ENCODE measurements at regions of chr18 and their contacts with region 1.

Region 1: DNA sequence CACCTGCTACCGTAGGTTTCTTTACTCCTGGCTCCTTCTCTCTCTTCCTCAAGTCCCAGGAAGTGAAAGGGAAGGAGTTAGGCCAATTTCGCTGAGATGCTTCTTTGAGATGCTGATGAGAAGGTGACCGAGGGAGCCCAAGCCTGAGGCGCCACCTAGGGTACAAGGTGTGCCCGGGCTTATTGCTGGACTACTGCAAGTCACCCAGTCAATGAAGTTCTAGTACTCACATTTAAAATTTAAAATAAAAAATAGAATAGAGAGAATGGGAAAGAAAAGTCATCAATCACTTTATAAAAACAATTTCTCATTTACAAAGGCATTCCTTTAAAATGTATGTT is 45.3 kb downstream of the ACAA2 start:
- DNase-seq: peak; percentile 18
- ATAC-seq: peak; percentile 75
- H3K4me3 ChIP-seq: no peak overlapping the region
- H3K27ac ChIP-seq: no peak overlapping the region
- H3K4me1 ChIP-seq: no peaks in the 10 kb centered on the region
- H3K27me3 ChIP-seq: no peaks in the 10 kb centered on the region
- CTCF ChIP-seq: peak; percentile 73
- EP300 ChIP-seq: no peak
- POLR2A ChIP-seq: no peak
- RAD21 ChIP-seq: peak; percentile 52; the same call in 1 of the 2 replicates

Region 2: GRCh38 chr18:49510393-49511115 is 257.5 kb before region 1 on chr18:
- CTCF ChIA-PET with region 1: interaction called, 6 read pairs
- POLR2A ChIA-PET with region 1: no interaction called
- in situ Hi-C with region 1: no loop called
- intact Hi-C with region 1: loop called (anchors 1 kb)
- DNase-seq: no peak
- ATAC-seq: peak; percentile 85
- H3K4me3 ChIP-seq: no peak overlapping the region
- H3K27ac ChIP-seq: no peak overlapping the region
- H3K4me1 ChIP-seq: peaks cover 13% of the 10 kb centered on the region
- H3K27me3 ChIP-seq: 0 out of 5 replicates have a peak, but pooled peaks cover 0 to 2% of the 10 kb centered on the region in 2 experiments
- CTCF ChIP-seq: peak; percentile 89
- EP300 ChIP-seq: no peak
- POLR2A ChIP-seq: no peak
- RAD21 ChIP-seq: peak; percentile 84

Region 3: GRCh38 chr18:49561289-49562193 is 206.5 kb before region 1 on chr18 and contains the start of gene LIPG:
- CTCF ChIA-PET with region 1: interaction called, 7 read pairs
- POLR2A ChIA-PET with region 1: no interaction called
- in situ Hi-C with region 1: no loop called
- intact Hi-C with region 1: loop called (anchors 1 kb)
- DNase-seq: peak; percentile 34
- ATAC-seq: peak; percentile 88
- H3K4me3 ChIP-seq: peak within 1 kb of the TSS; percentile 28 to 67 (median 46)
- H3K27ac ChIP-seq: no peak within 1 kb of the TSS
- H3K4me1 ChIP-seq: peaks cover 45% of the 10 kb centered on the region
- H3K27me3 ChIP-seq: peaks cover 16 to 37% of the 10 kb centered on the region in 2 experiments
- CTCF ChIP-seq: no peak
- EP300 ChIP-seq: no peak
- POLR2A ChIP-seq: peak; percentile 53 to 74; a peak in 3 of 4 replicates
- RAD21 ChIP-seq: no peak
- total RNA-seq, gene LIPG: 4.9 and 10.8 TPM in 2 replicates

Region 4: DNA sequence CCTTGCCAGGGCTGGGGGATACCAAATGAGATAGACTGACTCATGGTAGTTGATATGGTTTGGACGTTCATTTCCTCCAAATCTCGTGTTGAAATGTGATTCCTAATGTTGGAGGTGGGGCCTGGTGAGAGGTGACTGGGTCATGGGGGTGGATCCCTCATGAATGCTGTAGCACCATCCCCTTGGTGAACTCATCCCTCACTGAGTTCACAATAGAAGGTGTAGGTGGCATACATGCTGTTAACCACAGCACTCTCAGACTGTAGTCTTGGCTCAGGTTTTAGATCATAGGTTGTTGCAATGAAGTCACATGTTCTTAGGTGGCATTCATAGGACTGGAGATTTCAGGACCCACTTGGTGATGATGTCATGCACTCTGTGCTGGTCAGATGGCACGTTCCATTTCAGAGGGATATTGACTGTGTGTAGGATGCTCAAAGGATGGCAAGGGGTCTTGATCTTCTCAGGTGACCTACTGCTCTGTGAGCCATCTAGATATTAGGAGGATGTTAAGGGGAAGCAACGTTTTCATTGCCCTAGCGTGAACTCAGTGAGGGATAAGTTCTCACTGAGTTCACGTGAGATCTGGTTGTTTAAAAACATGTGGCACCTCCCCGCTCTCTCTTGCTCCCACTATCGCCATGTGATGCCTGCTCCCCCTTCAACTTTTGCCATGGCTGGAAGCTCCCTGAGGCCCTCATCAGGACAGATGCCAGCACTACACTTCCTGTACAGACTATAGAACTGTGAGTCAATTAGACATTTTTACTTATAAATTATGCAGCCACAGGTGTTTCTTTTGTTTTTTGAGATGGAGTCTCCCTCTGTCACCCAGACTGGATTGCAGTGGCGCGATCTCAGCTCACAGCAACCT is 119.1 kb after region 1 on chr18:
- CTCF ChIA-PET with region 1: no interaction called
- POLR2A ChIA-PET with region 1: no interaction called
- in situ Hi-C with region 1: no loop called
- intact Hi-C with region 1: no loop called
- DNase-seq: no peak
- ATAC-seq: no peak
- H3K4me3 ChIP-seq: no peak overlapping the region
- H3K27ac ChIP-seq: no peak overlapping the region
- H3K4me1 ChIP-seq: peaks cover 2% of the 10 kb centered on the region; the same call in 1 of the 2 replicates
- H3K27me3 ChIP-seq: no peaks in the 10 kb centered on the region
- CTCF ChIP-seq: no peak
- EP300 ChIP-seq: no peak
- POLR2A ChIP-seq: no peak
- RAD21 ChIP-seq: no peak

Measured in HepG2 (cell line).